ENCODE measurements at regions of chr6 and their contacts with region 1.

Region 1: DNA sequence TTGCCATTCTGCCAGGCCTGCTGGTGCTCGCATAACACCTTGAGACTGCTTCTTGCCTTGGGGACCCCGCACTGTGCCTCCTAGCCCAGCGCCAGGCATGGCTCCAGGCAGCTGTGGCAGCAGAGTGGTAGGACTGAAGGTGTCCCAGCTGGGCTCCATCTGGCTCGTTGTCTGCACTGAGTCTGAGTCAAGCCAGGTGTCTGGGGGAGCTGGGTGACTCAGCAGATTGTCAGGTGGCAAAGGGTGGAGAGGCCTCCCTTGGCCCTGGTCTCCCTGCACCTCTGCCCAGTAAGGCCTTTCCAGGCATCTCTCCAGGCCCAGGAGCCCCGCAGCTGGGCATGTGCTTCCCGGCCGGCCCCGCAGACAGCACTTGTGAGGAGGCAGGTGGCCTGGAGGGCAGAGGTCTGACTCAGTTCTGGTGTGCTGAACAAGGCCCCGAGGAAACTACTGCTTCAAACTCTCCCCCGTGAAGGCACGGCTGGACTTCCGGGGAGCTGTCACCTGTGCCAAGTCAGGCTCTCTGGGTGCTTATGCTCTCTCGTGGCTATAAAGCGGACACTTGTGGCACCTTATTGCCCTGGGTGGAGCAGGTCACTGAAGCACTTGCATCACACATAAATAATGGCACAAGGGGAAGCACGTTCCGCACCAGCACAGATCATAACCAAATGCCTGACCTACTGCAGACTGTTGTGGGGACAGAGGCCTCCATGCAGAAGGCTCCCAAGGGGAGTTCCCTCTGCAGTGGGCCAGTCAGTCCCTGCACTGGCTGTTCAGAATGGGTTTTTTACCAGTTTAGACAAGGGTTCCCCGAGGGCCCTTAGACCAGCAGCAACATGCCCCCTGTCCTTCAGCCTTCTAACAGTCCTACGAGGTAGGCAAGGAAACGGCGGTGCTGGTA is 27.5 kb downstream of the FOXC1 start:
- DNase-seq: no peak
- ATAC-seq: no peak
- H3K4me3 ChIP-seq: no peak overlapping the region
- H3K27ac ChIP-seq: no peak overlapping the region
- H3K4me1 ChIP-seq: no peaks in the 10 kb centered on the region
- H3K27me3 ChIP-seq: no peaks in the 10 kb centered on the region

Region 2: DNA sequence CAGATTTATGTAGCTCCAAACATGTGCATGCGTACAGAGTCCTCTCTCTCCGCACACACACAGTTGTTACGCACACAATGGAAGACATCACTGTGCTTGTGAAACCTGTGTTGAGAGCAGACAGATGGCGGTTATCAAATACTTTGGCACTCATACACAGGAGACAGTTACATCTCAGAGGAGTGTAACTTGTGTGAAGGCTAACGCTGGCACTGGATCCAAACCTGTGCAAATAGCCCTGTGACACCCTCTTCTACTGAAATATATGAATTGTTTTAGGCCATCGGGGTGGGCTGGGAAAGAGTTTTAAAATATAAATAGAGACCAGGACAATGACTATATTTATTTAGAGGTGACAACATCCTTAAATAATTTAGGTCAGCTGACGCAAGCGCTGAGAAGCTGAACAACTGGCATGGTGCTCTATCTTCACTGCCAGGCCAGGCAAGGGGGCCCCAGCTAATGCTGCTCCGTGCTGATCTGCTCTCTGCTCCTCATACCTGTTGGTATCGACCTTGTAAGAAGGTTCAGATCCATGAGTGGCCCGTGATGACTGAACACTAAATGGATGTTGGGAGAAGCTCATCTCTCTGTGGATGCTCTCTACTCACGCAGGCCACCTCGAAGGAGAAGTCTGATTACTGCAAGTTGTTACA is 41.9 kb after region 1 on chr6:
- intact Hi-C with region 1: loop called (anchors 5 kb)
- DNase-seq: no peak
- ATAC-seq: peak; percentile 68
- H3K4me3 ChIP-seq: no peak overlapping the region
- H3K27ac ChIP-seq: peak overlapping the region in 1 of 2 donors; percentile 65
- H3K4me1 ChIP-seq: peaks cover 3 to 4% of the 10 kb centered on the region in 2 donors
- H3K27me3 ChIP-seq: no peaks in the 10 kb centered on the region

Region 3: GRCh38 chr6:1757131-1757530 is 119.9 kb after region 1 on chr6:
- intact Hi-C with region 1: no loop called
- DNase-seq: no peak
- ATAC-seq: no peak
- H3K4me3 ChIP-seq: no peak overlapping the region
- H3K27ac ChIP-seq: no peak overlapping the region
- H3K4me1 ChIP-seq: no peaks in the 10 kb centered on the region
- H3K27me3 ChIP-seq: no peaks in the 10 kb centered on the region

Region 4: DNA sequence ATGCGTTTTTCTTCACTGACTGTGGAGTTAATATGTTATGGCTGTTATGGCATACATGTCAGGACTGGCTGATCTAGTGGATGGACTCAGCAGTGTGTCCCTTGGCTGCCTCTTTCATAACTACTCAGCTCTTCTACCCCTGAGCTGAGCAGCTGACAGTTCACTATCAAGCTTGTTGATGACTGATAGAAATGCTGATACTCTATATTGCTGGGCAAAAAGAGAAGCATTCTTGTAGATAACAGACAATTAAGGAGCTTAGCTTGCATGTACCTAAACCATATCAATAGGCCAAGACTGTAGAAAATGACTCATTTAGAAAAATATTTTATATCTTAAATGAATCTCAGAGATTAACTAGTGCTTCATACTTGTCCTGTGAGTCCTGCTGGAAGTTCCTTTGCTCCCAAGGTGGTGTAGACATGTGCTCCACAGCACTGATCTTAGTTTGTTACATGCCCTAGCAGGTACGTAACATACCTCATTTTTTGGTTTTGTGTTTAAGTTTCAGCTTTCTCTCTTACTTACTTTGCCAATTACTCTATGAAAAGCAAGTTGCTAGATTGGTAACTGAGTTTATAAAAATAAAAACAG is 371.3 kb after region 1 on chr6:
- intact Hi-C with region 1: loop called in 1 of 2 experiments (anchors 10 kb)
- DNase-seq: no peak
- ATAC-seq: no peak
- H3K4me3 ChIP-seq: no peak overlapping the region
- H3K27ac ChIP-seq: no peak overlapping the region
- H3K4me1 ChIP-seq: no peaks in the 10 kb centered on the region
- H3K27me3 ChIP-seq: no peaks in the 10 kb centered on the region